ENCODE measurements at regions of chr5 and their contacts with region 1.

Region 1: GRCh38 chr5:5005353-5005752 is 134.8 kb upstream of the ADAMTS16 start:
- DNase-seq: no peak

Region 2: GRCh38 chr5:4954048-4954447 is 51.3 kb before region 1 on chr5:
- intact Hi-C with region 1: loop called in 1 of 2 experiments (anchors 2 kb)
- DNase-seq: no peak

Region 3: GRCh38 chr5:5017827-5018577 is 12.6 kb after region 1 on chr5:
- intact Hi-C with region 1: no loop called
- DNase-seq: peak; percentile 83

Region 4: GRCh38 chr5:5037674-5038073 is 32.3 kb after region 1 on chr5:
- intact Hi-C with region 1: no loop called
- DNase-seq: no peak

Measured in posterior vena cava (tissue), 2 donors.